ENCODE measurements at regions of chr17 and their contacts with region 1.

Region 1: GRCh38 chr17:5592382-5592781 is 8.1 kb upstream of the NLRP1 start:
- DNase-seq: no peak
- ATAC-seq: no peak
- H3K4me3 ChIP-seq: no peak overlapping the region
- H3K27ac ChIP-seq: no peak overlapping the region
- H3K4me1 ChIP-seq: peaks cover 0 to 2% (median 0%) of the 10 kb centered on the region in 12 donors
- H3K27me3 ChIP-seq: peaks cover 0 to 33% (median 6%) of the 10 kb centered on the region in 9 donors
- CTCF ChIP-seq: peak; percentile 30 to 68 (median 54)
- POLR2A ChIP-seq: no peak

Region 2: DNA sequence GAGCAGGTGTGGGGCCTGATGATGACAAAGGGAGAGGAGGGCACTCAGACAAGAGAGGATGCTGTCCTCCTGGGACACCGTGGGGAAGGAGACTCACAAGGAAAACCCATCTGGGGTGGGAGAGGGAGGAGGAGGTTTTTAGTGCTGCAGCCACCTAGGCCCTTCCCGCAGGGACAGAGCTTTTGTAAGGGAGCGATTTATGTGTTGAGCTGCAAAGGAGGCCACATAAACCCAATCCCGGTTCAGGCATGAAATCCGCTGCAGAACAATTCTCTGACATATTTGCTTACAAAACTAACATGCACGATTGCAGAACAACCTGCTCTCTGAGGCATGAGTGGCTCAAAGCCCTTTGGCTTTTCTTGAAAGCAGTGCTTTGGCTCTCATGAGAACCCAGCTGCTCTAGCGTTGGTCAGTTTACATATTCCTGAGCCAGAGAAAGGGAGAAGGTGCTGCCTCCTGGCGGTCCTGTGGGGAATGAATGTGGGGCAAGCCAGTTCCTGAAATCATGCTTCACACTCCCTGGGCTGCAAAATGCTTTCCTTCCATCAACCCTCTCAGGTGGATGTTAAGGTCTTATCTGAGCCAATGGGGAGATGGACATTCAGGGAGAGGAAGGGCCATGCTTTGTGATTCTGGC is 114.3 kb after region 1 on chr17:
- intact Hi-C with region 1: loop called in 9 of 10 experiments (anchors 2 to 10 kb)
- DNase-seq: peak in 3 of 5 donors; percentile 20 to 42 (median 41)
- ATAC-seq: peak in 1 of 4 donors; percentile 47
- H3K4me3 ChIP-seq: no peak overlapping the region
- H3K27ac ChIP-seq: no peak overlapping the region
- H3K4me1 ChIP-seq: no peaks in the 10 kb centered on the region
- H3K27me3 ChIP-seq: peaks cover 0 to 24% (median 5%) of the 10 kb centered on the region in 9 donors
- CTCF ChIP-seq: peak; percentile 31 to 66 (median 52)
- POLR2A ChIP-seq: no peak

Region 3: GRCh38 chr17:6045621-6046357 is 453.4 kb after region 1 on chr17:
- intact Hi-C with region 1: loop called in 3 of 10 experiments (anchors 5 to 10 kb)
- DNase-seq: no peak
- ATAC-seq: no peak
- H3K4me3 ChIP-seq: no peak overlapping the region
- H3K27ac ChIP-seq: no peak overlapping the region
- H3K4me1 ChIP-seq: peaks cover 0 to 6% (median 0%) of the 10 kb centered on the region in 12 donors
- H3K27me3 ChIP-seq: peaks cover 0 to 6% (median 0%) of the 10 kb centered on the region in 9 donors
- CTCF ChIP-seq: peak in 1 of 12 donors; percentile 4
- POLR2A ChIP-seq: no peak

Region 4: GRCh38 chr17:6069539-6070429 is 477.4 kb after region 1 on chr17 and contains the start of gene WSCD1:
- intact Hi-C with region 1: loop called in 1 of 10 experiments (anchors 10 kb)
- DNase-seq: peak in 1 of 5 donors; percentile 39
- ATAC-seq: peak; percentile 20 to 74 (median 64)
- H3K4me3 ChIP-seq: peak within 1 kb of the TSS; percentile 42 to 88 (median 64)
- H3K27ac ChIP-seq: peak within 1 kb of the TSS in 4 of 12 donors; percentile 10 to 67 (median 49)
- H3K4me1 ChIP-seq: peaks cover 0 to 20% (median 0%) of the 10 kb centered on the region in 12 donors
- H3K27me3 ChIP-seq: peaks cover 0 to 41% (median 3%) of the 10 kb centered on the region in 9 donors
- CTCF ChIP-seq: no peak
- POLR2A ChIP-seq: no peak
- total RNA-seq, gene WSCD1: 3.6 to 12.4 (median 5.3) TPM

Measured in heart left ventricle (tissue), 16 donors.